Heart right ventricle (tissue), 16 donors: ENCODE measurements at regions of chr3 and their contacts with region 1.

Region 1: DNA sequence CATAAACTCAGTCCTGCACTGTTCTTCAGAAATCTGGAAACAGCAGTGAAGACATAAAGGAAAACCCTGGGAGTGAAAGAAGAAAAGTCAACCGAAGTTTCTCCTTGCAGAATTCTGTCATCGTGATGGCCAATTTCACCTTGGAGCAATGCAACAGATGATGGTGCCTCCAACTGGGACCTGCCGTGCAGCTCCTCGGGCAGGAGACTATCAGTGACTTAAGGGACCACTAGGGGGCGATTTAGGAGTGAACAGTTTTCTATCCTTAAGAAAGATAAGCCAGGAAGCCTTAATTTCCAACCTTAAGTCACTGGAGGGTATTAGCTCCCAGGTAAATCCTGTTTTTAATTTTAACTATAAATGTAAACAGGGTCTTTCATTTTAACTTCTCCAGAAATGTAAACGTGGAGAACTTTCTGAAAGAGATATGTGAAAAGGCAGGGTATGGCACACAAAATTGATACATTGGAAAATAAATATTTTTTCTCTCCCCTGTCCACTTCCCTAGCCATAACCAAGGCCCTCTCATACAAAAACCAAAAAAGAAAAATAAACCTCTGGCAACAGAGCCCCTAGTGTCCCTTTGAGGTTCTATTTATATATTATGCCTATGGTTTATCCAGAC is 116.3 kb downstream of the PDZRN3 start:
- DNase-seq: peak in 1 of 2 donors; percentile 65
- ATAC-seq: peak in 6 of 8 donors; percentile 62 to 74 (median 68)
- H3K4me3 ChIP-seq: no peak overlapping the region
- H3K27ac ChIP-seq: peak overlapping the region in 7 of 10 donors; percentile 6 to 73 (median 44)
- H3K4me1 ChIP-seq: peaks cover 0 to 81% (median 37%) of the 10 kb centered on the region in 9 donors
- H3K27me3 ChIP-seq: no peaks in the 10 kb centered on the region
- CTCF ChIP-seq: peak; percentile 43 to 80 (median 77)

Region 2: DNA sequence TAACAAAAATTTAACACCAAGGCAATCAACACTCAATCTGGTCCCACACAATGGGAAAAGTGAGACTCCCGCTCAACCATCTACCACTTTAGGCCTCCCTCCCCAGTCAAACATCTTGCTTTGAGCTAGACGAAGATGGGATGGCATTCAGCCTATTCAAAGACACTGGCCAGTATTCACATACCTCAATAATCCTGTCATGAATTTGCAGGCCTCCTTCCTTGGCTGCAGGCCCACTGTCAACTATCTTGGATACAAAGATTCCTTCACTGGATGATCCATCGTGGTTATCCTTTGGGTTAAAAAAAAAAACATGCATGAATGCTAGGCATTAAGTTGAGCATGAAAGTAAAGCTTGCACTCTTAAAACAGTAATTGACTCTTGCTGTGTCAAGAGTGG is 93.7 kb after region 1 on chr3:
- intact Hi-C with region 1: loop called in 2 of 10 experiments (anchors 10 kb)
- DNase-seq: no peak
- ATAC-seq: peak in 4 of 8 donors; percentile 28 to 77 (median 47)
- H3K4me3 ChIP-seq: no peak overlapping the region
- H3K27ac ChIP-seq: peak overlapping the region in 6 of 10 donors; percentile 9 to 67 (median 47)
- H3K4me1 ChIP-seq: peaks cover 0 to 87% (median 48%) of the 10 kb centered on the region in 9 donors
- H3K27me3 ChIP-seq: no peaks in the 10 kb centered on the region
- CTCF ChIP-seq: no peak

Region 3: GRCh38 chr3:73766599-73767381 is 258.3 kb after region 1 on chr3:
- intact Hi-C with region 1: loop called in 3 of 10 experiments (anchors 2 to 10 kb)
- DNase-seq: peak in 1 of 2 donors; percentile 5
- ATAC-seq: peak; percentile 40 to 75 (median 68)
- H3K4me3 ChIP-seq: peak overlapping the region in 5 of 10 donors; percentile 13 to 24 (median 21)
- H3K27ac ChIP-seq: peak overlapping the region in 9 of 10 donors; percentile 26 to 79 (median 55)
- H3K4me1 ChIP-seq: peaks cover 0 to 27% (median 10%) of the 10 kb centered on the region in 9 donors
- H3K27me3 ChIP-seq: no peaks in the 10 kb centered on the region
- CTCF ChIP-seq: no peak

Region 4: GRCh38 chr3:73827725-73828211 is 319.3 kb after region 1 on chr3:
- intact Hi-C with region 1: loop called in 1 of 10 experiments (anchors 5 kb)
- DNase-seq: peak in 1 of 2 donors; percentile 15
- ATAC-seq: peak; percentile 75 to 92 (median 88)
- H3K4me3 ChIP-seq: no peak overlapping the region
- H3K27ac ChIP-seq: peak overlapping the region; percentile 46 to 84 (median 74)
- H3K4me1 ChIP-seq: peaks cover 9 to 29% (median 18%) of the 10 kb centered on the region in 9 donors
- H3K27me3 ChIP-seq: no peaks in the 10 kb centered on the region
- CTCF ChIP-seq: no peak

Region 5: DNA sequence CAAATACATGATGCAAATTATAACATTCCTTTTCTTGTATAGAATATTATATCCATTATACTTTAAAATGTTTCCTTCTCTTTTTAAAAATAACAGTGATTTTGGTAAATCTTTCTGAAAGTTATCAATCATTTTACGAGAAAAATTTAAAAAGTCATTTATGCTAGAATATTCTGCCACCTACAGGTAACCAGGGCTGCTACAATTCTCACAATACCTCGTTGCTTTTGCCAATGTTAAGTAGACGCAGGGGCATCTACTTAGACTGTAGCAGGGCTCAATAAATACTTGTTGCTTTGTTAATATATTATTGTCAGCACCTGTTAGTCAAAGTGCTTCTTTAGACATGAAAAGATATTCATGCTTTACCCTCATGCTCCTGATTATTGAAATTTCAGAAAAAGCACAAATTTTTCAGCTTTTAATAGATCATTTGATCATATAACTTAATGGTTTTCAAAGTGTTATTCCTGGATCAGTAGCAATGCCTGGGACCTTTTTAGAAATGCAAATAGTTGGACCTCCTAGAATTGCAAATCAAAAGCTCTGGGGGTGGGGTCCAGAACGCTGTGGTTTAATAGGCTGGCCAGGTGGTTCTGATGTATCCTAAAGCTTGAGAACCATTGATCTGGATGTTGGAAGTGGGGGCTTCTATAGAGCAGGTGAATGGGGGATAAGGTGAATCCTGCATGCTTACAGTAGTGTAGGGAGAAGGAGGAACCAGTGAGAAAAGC is 339.9 kb after region 1 on chr3:
- intact Hi-C with region 1: loop called in 9 of 10 experiments (anchors 5 to 10 kb)
- DNase-seq: no peak
- ATAC-seq: peak in 1 of 8 donors; percentile 57
- H3K4me3 ChIP-seq: no peak overlapping the region
- H3K27ac ChIP-seq: no peak overlapping the region
- H3K4me1 ChIP-seq: peaks cover 0 to 7% (median 0%) of the 10 kb centered on the region in 9 donors
- H3K27me3 ChIP-seq: no peaks in the 10 kb centered on the region
- CTCF ChIP-seq: peak; percentile 27 to 81 (median 68)